Right ventricle myocardium superior (tissue), 1 donor: ENCODE measurements at regions of chr18 and their contacts with region 1.

Region 1: GRCh38 chr18:47772374-47773248 is 157.8 kb downstream of the SMAD2 start:
- DNase-seq: peak; percentile 71
- ATAC-seq: peak; percentile 80

Region 2: GRCh38 chr18:47846431-47846830 is 73.8 kb after region 1 on chr18:
- intact Hi-C with region 1: loop called (anchors 10 kb)
- DNase-seq: no peak
- ATAC-seq: no peak

Region 3: GRCh38 chr18:48021273-48021914 is 248.8 kb after region 1 on chr18:
- intact Hi-C with region 1: loop called (anchors 2 kb)
- DNase-seq: no peak
- ATAC-seq: no peak